Calu3 (cell line): ENCODE measurements at regions of chrX and their contacts with region 1.

Region 1: DNA sequence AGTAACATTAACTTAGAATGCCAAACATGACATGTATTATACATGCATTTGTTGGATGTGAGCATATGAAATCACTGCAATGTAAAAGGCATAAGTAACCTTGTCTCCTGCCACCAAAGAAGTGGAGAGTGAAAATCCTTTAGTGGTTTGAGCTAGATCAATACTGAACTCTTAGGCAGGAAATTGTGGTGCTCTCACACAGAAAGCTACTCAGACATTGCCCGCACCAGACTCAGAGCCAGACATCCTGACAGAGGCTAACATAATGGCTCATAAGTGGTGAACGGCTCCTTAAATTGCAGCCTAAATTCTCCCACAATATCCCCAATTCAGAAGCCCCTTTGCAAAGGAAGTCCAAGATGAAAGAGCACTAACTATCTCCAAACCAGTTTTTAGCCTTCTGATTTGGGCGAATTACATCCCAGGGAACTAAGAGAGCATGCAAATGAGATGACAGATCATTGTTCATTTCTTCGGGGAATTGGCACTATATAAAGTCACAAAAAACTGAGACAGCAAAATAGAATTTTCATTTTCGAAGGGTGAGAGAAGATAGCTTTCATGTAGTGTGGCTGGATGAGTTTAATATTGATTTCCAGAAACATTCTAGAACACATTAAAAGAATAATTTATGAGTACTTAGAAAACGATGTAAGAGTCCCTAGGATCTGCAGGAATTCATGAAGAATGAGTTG is 233.6 kb upstream of the RPS6KA3 start:
- DNase-seq: no peak
- H3K4me3 Mint-ChIP-seq: no peak overlapping the region
- H3K27ac Mint-ChIP-seq: no peak overlapping the region
- H3K4me1 Mint-ChIP-seq: no peaks in the 10 kb centered on the region
- H3K27me3 Mint-ChIP-seq: no peaks in the 10 kb centered on the region
- CTCF ChIP-seq: no peak

Region 2: DNA sequence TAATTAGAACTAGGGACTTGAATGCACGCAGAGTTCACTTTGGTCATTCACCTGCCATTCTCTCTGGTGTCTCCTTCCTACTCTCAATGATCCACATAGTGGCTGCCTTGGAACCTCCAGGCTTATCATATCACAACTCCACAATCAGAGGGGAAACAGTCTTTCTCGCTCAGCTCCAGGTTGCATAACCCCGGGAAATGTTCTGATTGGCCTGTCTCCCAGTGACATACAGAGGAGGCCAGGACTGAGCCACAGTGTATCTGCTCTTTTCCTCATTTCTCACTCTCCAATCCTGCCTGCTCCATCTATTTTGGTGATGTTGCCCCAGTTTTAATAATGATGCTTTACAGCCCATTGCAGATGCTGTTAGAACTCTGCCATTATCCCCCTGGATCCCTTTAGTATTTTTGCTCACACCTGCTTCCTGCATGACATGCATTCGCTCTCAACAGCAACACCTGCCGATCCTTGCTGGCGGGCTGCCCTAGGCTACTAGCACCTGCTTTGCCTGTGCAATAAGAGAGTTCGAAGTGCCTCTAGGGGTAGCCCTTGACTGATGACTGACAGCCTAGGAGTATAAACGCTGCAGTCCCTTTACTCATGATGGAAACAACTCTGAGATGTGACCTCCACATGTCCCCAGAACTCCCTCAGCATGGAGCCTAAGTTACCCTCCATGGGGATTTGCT is 22.3 kb before region 1 on chrX:
- CTCF ChIA-PET with region 1: no interaction called
- intact Hi-C with region 1: loop called (anchors 1 kb)
- DNase-seq: no peak
- H3K4me3 Mint-ChIP-seq: no peak overlapping the region
- H3K27ac Mint-ChIP-seq: no peak overlapping the region
- H3K4me1 Mint-ChIP-seq: no peaks in the 10 kb centered on the region
- H3K27me3 Mint-ChIP-seq: no peaks in the 10 kb centered on the region
- CTCF ChIP-seq: no peak